K562 (cell line): ENCODE measurements at regions of chr18 and their contacts with region 1.

Region 1: DNA sequence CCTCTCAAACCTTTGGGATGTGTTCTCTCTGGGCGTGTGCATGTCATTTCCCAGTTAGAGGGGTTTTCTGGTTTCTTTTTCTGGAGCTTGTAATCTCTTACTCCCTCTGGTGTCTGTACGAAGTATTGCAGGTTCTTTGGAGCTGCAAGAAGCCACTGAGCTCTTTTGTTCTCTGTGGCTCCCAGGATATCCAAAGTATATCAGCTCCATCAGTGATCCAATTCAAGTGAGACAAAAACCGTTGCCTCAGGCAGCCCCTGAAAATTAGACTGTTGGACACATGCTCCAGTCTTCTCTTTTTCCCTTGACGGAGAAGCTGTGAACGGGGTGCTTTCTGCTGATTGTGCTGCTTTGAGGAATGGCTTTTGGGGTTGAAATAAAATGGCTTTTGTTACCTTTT is 59.0 kb upstream of the LDLRAD4 start:
- DNase-seq: peak; percentile 60 to 73 (median 70)
- ATAC-seq: peak; percentile 84
- H3K4me3 ChIP-seq: no peak overlapping the region
- H3K27ac ChIP-seq: no peak overlapping the region
- H3K4me1 ChIP-seq: no peaks in the 10 kb centered on the region; a peak in 1 of 5 replicates
- H3K27me3 ChIP-seq: peaks cover 18 to 35% of the 10 kb centered on the region in 2 experiments
- CTCF ChIP-seq: peak; percentile 65 to 75 (median 74)
- EP300 ChIP-seq: no peak
- POLR2A ChIP-seq: no peak
- RAD21 ChIP-seq: peak; percentile 32 to 67; a peak in 3 of 4 replicates

Region 2: DNA sequence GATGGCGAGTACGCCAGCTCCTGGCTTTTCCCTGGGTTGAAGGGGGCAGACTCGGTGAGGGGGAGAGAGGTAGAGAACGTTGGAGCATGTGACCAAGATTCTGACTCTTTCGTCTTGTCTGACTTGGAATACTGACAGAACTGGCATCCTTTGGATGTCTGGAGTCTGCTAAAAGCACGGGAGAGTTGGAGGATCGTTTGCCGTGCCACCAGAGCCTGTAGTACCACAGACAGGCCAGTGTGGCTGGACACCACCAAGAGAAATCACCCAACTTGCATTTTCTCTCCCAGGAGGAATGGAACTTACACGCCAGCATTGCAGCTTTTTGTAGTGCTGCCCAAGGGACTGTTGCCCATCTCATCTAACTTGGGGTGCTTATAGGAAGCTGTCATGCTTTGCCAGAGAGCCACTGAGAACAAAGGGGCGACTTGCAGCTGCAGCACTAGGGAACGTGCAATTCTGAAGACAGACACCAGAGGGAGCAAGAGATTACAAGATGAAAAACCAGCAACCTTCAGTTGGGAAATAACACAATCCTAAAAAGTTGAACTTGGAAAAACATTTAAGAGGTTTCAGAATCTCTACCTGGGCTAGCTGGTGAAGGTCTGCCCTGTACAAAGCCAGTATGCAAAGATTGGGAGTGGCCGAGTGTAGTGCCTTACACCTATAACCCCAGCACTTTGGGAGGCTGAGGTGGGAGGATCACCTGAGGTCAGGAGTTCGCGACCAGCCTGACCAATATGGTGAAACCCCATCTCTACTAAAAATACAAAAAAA is 432.6 kb before region 1 on chr18:
- CTCF ChIA-PET with region 1: interaction called, 14 read pairs
- POLR2A ChIA-PET with region 1: no interaction called
- in situ Hi-C with region 1: loop called (anchors 10 kb)
- intact Hi-C with region 1: loop called (anchors 10 kb)
- DNase-seq: peak; percentile 57 to 76 (median 65)
- ATAC-seq: peak; percentile 81
- H3K4me3 ChIP-seq: no peak overlapping the region
- H3K27ac ChIP-seq: no peak overlapping the region
- H3K4me1 ChIP-seq: no peaks in the 10 kb centered on the region
- H3K27me3 ChIP-seq: no peaks in the 10 kb centered on the region
- CTCF ChIP-seq: peak; percentile 81 to 91 (median 84)
- EP300 ChIP-seq: no peak
- POLR2A ChIP-seq: peak; percentile 32; the same call in 1 of the 2 replicates
- RAD21 ChIP-seq: peak; percentile 90 to 92

Region 3: GRCh38 chr18:12737243-12737902 is 422.2 kb before region 1 on chr18:
- CTCF ChIA-PET with region 1: no interaction called
- POLR2A ChIA-PET with region 1: no interaction called
- in situ Hi-C with region 1: no loop called
- intact Hi-C with region 1: loop called (anchors 10 kb)
- DNase-seq: peak in 1 of 4 experiments; percentile 14
- ATAC-seq: peak; percentile 64
- H3K4me3 ChIP-seq: no peak overlapping the region
- H3K27ac ChIP-seq: no peak overlapping the region
- H3K4me1 ChIP-seq: peaks cover 3 to 8% of the 10 kb centered on the region in 2 experiments; a peak in 4 of 5 replicates
- H3K27me3 ChIP-seq: no peaks in the 10 kb centered on the region
- CTCF ChIP-seq: peak in 2 of 3 experiments; percentile 21 to 32; a peak in 3 of 6 replicates
- EP300 ChIP-seq: no peak
- POLR2A ChIP-seq: no peak
- RAD21 ChIP-seq: peak in 1 of 2 experiments; percentile 38; a peak in 2 of 4 replicates

Region 4: DNA sequence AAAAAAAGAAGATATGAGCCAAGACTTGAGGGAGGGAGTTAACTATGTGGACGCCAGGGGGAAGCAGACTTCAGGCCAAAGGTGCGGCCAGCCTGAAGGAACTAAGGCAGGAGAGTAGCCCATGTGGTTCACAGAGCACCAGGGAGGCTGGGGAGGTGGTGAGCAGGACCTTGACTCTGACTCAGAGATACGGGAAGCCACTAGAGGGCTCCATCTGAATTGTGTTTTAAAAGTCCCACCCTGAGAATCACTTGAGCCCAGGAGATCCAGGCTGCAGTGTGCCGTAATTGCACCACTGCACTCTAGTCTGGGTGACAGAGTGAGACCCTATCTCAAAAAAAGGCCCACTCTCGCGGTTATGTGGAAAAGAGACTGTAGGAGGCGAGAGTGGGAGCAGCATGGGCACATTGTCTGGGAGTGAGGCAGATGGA is 156.1 kb before region 1 on chr18:
- CTCF ChIA-PET with region 1: interaction called, 3 read pairs
- POLR2A ChIA-PET with region 1: no interaction called
- in situ Hi-C with region 1: no loop called
- intact Hi-C with region 1: loop called (anchors 10 kb)
- DNase-seq: peak; percentile 44 to 79 (median 58)
- ATAC-seq: peak; percentile 97
- H3K4me3 ChIP-seq: no peak overlapping the region
- H3K27ac ChIP-seq: no peak overlapping the region
- H3K4me1 ChIP-seq: no peaks in the 10 kb centered on the region; a peak in 2 of 5 replicates
- H3K27me3 ChIP-seq: no peaks in the 10 kb centered on the region
- CTCF ChIP-seq: peak; percentile 46 to 71 (median 63)
- EP300 ChIP-seq: no peak
- POLR2A ChIP-seq: no peak
- RAD21 ChIP-seq: peak in 1 of 2 experiments; percentile 28; a peak in 2 of 4 replicates

Region 5: GRCh38 chr18:13112982-13113381 is 46.6 kb before region 1 on chr18:
- CTCF ChIA-PET with region 1: no interaction called
- POLR2A ChIA-PET with region 1: no interaction called
- in situ Hi-C with region 1: no loop called
- intact Hi-C with region 1: loop called (anchors 1 kb)
- DNase-seq: peak; percentile 55 to 75 (median 66)
- ATAC-seq: peak; percentile 97
- H3K4me3 ChIP-seq: no peak overlapping the region
- H3K27ac ChIP-seq: no peak overlapping the region
- H3K4me1 ChIP-seq: no peaks in the 10 kb centered on the region
- H3K27me3 ChIP-seq: no peaks in the 10 kb centered on the region
- CTCF ChIP-seq: peak; percentile 39 to 70 (median 52); a peak in 5 of 6 replicates
- EP300 ChIP-seq: no peak
- POLR2A ChIP-seq: no peak
- RAD21 ChIP-seq: peak in 1 of 2 experiments; percentile 25; a peak in 2 of 4 replicates

Region 6: DNA sequence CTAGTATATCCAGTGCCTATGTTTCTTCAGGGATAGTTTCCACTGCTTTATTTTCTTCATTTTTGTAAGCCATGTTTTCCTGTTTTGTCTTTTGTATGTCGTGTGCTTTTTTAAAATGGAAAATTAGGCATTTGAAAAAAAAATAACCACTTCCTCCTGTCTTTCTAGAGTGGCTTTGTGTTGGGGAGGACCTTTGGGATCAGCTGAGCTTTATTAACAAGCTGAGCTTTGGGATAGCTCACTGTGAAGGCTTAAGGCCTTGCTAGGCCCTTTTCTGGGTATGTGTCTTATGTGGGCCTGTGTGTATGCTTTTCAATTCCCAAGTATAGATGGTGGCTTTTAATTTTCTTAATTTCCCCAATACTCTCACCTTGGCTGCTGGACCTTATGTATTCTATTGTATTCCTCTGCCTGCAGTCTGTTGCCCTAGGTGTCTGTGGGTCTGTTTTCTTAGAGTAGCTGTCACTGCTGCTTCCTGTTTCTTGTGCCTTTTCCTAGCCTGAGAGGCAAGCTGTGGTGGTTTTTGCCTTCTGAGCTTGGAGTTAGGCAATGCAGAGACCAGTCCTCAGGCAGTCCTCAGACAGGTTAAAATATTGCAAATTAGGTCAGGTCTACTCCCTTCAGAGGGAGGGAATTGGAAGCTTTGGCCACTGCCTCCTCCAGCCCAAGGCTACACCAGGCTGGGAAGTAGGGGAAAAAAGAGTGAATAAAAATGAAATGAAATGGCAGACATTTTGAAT is 193.7 kb after region 1 on chr18:
- CTCF ChIA-PET with region 1: no interaction called
- POLR2A ChIA-PET with region 1: no interaction called
- in situ Hi-C with region 1: no loop called
- intact Hi-C with region 1: no loop called
- DNase-seq: no peak
- ATAC-seq: no peak
- H3K4me3 ChIP-seq: no peak overlapping the region
- H3K27ac ChIP-seq: no peak overlapping the region
- H3K4me1 ChIP-seq: no peaks in the 10 kb centered on the region
- H3K27me3 ChIP-seq: no peaks in the 10 kb centered on the region
- CTCF ChIP-seq: no peak
- EP300 ChIP-seq: no peak
- POLR2A ChIP-seq: no peak
- RAD21 ChIP-seq: no peak